Prostate gland (tissue), 2 donors: ENCODE measurements at regions of chr3 and their contacts with region 1.

Region 1: GRCh38 chr3:67037615-67038014 is 39.5 kb downstream of the KBTBD8 start:
- DNase-seq: no peak
- H3K4me3 ChIP-seq: no peak overlapping the region
- H3K27ac ChIP-seq: no peak overlapping the region
- H3K4me1 ChIP-seq: no peaks in the 10 kb centered on the region
- H3K27me3 ChIP-seq: no peaks in the 10 kb centered on the region
- CTCF ChIP-seq: no peak
- POLR2A ChIP-seq: no peak

Region 2: GRCh38 chr3:66407611-66408218 is 629.9 kb before region 1 on chr3:
- intact Hi-C with region 1: no loop called
- DNase-seq: peak; percentile 56
- H3K4me3 ChIP-seq: no peak overlapping the region
- H3K27ac ChIP-seq: peak overlapping the region in 1 of 2 donors; percentile 44
- H3K4me1 ChIP-seq: peaks cover 15% of the 10 kb centered on the region
- H3K27me3 ChIP-seq: no peaks in the 10 kb centered on the region
- CTCF ChIP-seq: peak; percentile 86 to 88 (median 87)
- POLR2A ChIP-seq: no peak

Region 3: DNA sequence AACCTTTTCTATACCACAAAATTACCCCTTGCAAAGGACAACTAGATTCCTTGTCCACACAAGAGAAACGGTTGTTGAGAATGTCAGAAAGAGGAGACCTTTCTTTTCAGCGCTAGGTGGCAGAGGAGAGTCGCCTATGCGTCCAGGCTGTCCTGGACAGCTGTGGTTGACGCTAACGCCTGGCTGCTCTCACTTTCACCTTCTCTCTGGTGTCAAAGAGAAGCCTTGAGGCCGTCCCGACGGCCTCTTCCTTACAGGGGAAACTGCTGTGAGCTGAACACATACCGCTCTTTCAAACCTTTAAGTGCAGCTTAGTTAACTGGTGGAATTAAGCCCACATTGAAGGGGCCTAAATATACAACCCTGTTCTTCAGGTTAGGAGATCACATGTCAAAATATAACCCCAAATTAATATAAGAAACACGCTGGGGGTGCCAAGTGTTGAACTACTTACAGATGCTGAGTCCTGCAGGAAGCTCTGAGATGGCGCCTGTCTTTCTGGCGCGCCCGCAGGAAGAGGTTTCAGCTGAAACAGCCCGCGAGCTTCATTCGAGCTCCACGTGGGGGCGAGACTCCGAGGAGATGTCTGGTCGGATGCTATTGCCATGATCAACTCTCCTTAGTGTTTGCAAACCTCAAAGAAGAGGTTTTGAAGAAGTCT is 65.6 kb before region 1 on chr3:
- intact Hi-C with region 1: loop called (anchors 5 kb)
- DNase-seq: peak; percentile 56
- H3K4me3 ChIP-seq: peak overlapping the region in 1 of 2 donors; percentile 2
- H3K27ac ChIP-seq: no peak overlapping the region
- H3K4me1 ChIP-seq: no peaks in the 10 kb centered on the region
- H3K27me3 ChIP-seq: no peaks in the 10 kb centered on the region
- CTCF ChIP-seq: peak; percentile 23 to 65 (median 54)
- POLR2A ChIP-seq: no peak